Mammary epithelial cell (primary cell): ENCODE measurements at regions of chr9 and their contacts with region 1.

Region 1: DNA sequence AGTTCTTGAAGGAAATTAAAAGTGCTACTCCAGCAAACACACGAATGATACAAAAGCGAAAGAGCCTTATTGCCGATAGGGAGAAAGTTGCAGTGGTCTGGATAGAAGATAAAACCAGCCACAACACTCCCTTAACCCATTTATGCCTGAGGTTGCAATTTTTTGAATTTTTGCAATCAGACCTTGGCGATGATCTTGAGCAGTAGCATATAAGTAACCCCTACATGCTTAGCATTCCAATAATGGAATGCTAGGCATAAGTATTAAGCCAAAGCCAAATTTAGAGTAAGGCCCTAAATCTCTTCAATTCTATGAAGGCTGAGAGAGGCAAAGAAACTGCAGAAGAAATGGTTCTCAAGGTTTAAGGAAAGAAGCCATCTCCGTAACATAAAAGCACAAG is 153.5 kb downstream of the SLC28A3 start:
- DNase-seq: no peak
- H3K4me3 ChIP-seq: no peak overlapping the region
- H3K27ac ChIP-seq: no peak overlapping the region
- H3K4me1 ChIP-seq: peaks cover 3% of the 10 kb centered on the region
- H3K27me3 ChIP-seq: peaks cover 2% of the 10 kb centered on the region
- CTCF ChIP-seq: no peak

Region 2: DNA sequence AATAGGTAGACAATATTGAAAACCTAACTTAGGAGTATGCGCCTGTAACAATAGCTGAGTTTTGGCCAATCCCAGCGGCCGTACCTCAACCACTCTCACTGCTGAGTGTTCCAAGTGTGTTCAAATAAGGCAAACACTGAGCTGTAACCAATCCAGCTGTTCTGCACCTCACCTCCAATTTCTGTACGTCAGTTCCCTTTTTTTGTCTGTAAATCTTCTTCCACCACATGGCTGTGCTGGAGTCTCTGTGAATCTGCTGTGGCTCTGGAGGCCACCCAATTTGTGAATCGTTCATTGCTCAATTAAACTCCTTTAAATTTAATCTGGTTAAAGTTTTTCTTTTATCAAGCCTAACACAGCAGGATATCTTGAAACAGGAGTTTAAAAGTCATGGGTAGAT is 37.2 kb after region 1 on chr9:
- CTCF ChIA-PET with region 1: no interaction called
- dilution Hi-C with region 1: loop called (anchors 5 kb)
- in situ Hi-C with region 1: no loop called
- intact Hi-C with region 1: no loop called
- DNase-seq: no peak
- H3K4me3 ChIP-seq: no peak overlapping the region
- H3K27ac ChIP-seq: no peak overlapping the region
- H3K4me1 ChIP-seq: no peaks in the 10 kb centered on the region
- H3K27me3 ChIP-seq: peaks cover 2% of the 10 kb centered on the region
- CTCF ChIP-seq: no peak